ENCODE measurements at regions of chr17 and their contacts with region 1.

Region 1: GRCh38 chr17:78865682-78866390 is 25.2 kb upstream of the USP36 start:
- DNase-seq: peak; percentile 84

Region 2: GRCh38 chr17:78852709-78853121 is 13.1 kb before region 1 on chr17:
- CTCF ChIA-PET with region 1: interaction called, 30 read pairs
- POLR2A ChIA-PET with region 1: no interaction called
- DNase-seq: peak; percentile 70

Region 3: GRCh38 chr17:78970834-78971773 is 105.3 kb after region 1 on chr17:
- CTCF ChIA-PET with region 1: interaction called, 27 read pairs
- POLR2A ChIA-PET with region 1: interaction called, 4 read pairs
- DNase-seq: peak; percentile 82

Measured in HEK293T (cell line).